Heart right ventricle (tissue), 16 donors: ENCODE measurements at regions of chr18 and their contacts with region 1.

Region 1: DNA sequence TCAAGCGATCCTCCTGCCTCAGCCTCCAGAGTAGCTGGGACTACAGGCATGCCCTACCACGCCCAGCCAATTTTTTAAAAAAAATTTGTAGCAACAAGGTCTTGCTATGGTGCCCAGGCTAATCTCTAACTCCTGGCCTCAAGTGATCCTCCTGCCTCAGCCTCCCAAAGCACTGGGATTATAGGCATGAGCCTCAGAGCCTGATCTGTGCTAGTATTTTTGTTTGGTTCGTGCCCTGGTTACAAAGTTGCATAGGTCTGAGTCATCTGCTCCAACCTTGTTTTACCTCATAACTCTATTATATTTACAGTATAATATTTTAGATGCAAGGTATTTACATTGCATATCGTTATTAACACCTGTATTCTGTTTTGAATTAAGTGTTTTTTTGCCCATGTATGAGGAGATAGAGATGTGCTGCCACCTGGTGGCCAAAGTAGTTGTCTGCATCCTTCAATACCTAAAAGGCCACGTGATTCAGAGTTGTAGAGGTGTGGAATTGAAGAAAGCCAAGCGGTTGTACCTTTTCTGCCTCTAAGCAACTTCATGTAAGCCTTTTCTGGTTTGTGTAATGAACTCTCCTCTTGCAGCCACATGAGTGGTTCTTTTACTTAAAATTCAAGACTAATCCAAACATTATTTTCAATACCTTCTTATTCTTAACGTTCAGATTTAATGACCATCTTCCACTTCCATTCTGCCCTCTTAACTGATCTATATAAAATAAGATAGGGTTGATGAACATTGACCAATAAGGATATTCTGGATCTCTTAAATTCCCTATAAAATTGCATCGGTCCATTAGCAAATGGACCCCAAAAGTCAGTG is 19.9 kb upstream of the CABYR start:
- DNase-seq: peak; percentile 35 to 56
- ATAC-seq: peak; percentile 57 to 86 (median 72)
- H3K4me3 ChIP-seq: no peak overlapping the region
- H3K27ac ChIP-seq: no peak overlapping the region
- H3K4me1 ChIP-seq: peaks cover 0 to 7% (median 0%) of the 10 kb centered on the region in 9 donors
- H3K27me3 ChIP-seq: no peaks in the 10 kb centered on the region
- CTCF ChIP-seq: peak; percentile 81 to 95 (median 93)

Region 2: GRCh38 chr18:23619388-23619881 is 499.5 kb before region 1 on chr18:
- intact Hi-C with region 1: loop called in 5 of 10 experiments (anchors 5 to 10 kb)
- DNase-seq: peak in 1 of 2 donors; percentile 35
- ATAC-seq: peak; percentile 42 to 79 (median 72)
- H3K4me3 ChIP-seq: peak overlapping the region in 9 of 10 donors; percentile 23 to 69 (median 55)
- H3K27ac ChIP-seq: peak overlapping the region in 5 of 10 donors; percentile 20 to 44 (median 36)
- H3K4me1 ChIP-seq: peaks cover 0 to 15% (median 10%) of the 10 kb centered on the region in 9 donors
- H3K27me3 ChIP-seq: peaks cover 0 to 35% (median 0%) of the 10 kb centered on the region in 7 donors
- CTCF ChIP-seq: peak in 1 of 9 donors; percentile 7

Region 3: DNA sequence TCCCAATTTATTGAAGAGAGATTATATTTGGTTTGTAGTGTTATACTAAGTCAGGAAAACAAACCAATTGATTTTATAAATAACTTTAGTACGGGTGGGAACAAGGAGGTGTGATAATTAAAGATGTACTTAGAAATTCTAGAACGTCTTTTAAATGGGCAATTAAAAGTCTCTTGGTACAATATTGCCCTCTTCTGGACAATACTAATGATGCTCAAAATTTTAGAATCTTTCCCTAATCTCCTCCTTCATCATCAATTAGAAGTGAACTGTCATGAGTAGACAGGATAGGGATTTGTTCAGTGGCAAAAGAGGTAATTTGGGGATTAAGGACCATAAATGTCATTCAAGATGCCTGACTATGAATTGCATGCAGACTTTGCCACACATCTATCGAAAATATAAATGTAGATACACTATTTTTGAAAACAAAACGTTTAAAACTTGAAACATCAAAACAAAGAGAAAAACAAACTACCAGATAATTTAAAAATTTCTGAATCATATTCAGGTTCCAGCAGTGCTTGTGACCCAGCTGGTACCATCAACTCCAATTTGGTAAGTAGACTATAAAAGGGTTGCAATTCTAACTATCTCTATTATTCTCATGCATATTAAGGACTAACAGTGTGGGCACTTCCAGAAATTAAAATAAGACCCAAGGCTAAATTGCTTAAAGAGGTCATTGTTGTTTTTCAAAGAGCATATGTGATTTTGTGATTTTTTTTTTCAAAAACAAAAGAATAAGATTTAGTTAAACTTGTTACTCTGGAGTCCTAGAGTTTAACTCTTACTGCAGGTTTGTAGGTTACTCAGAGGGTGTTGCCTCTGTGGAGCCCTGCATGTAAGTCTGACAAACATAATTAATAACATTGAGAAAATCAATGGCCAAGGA is 306.2 kb before region 1 on chr18:
- intact Hi-C with region 1: loop called in 3 of 10 experiments (anchors 5 to 10 kb)
- DNase-seq: no peak
- ATAC-seq: no peak
- H3K4me3 ChIP-seq: no peak overlapping the region
- H3K27ac ChIP-seq: no peak overlapping the region
- H3K4me1 ChIP-seq: peaks cover 0 to 14% (median 0%) of the 10 kb centered on the region in 9 donors
- H3K27me3 ChIP-seq: no peaks in the 10 kb centered on the region
- CTCF ChIP-seq: peak; percentile 28 to 71 (median 62)

Region 4: DNA sequence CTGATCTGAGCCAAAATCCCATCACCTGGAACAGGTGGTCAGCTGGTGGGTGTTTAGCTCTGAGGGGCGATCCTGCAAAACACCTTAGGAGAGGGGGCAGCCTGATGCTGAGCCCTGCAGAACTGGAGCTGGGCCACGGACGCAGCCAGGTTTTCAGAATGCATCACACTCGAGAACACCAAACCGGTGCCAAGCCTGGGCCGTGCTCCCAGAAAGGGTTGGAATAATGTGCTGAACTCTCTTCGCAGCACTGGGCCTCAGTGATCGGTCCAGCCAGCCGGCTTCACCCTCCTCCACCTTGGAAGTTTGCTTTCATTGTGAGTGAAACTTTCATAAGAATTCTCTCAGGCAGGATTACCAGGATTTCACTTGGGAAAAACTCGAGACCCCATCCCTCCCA is 160.9 kb before region 1 on chr18:
- intact Hi-C with region 1: loop called in 8 of 10 experiments (anchors 2 to 10 kb)
- DNase-seq: peak; percentile 74 to 78
- ATAC-seq: peak; percentile 86 to 98 (median 94)
- H3K4me3 ChIP-seq: no peak overlapping the region
- H3K27ac ChIP-seq: peak overlapping the region in 2 of 10 donors; percentile 32 to 36
- H3K4me1 ChIP-seq: peaks cover 0 to 3% (median 0%) of the 10 kb centered on the region in 9 donors
- H3K27me3 ChIP-seq: no peaks in the 10 kb centered on the region
- CTCF ChIP-seq: no peak

Region 5: GRCh38 chr18:24014062-24014985 is 104.6 kb before region 1 on chr18 and contains the start of gene TTC39C:
- intact Hi-C with region 1: loop called in 2 of 10 experiments (anchors 5 to 10 kb)
- DNase-seq: peak; percentile 66 to 69
- ATAC-seq: peak; percentile 72 to 90 (median 84)
- H3K4me3 ChIP-seq: peak within 1 kb of the TSS; percentile 57 to 95 (median 86)
- H3K27ac ChIP-seq: peak within 1 kb of the TSS; percentile 35 to 94 (median 80)
- H3K4me1 ChIP-seq: peaks cover 0 to 81% (median 10%) of the 10 kb centered on the region in 9 donors
- H3K27me3 ChIP-seq: no peaks in the 10 kb centered on the region
- CTCF ChIP-seq: no peak
- total RNA-seq, gene TTC39C: 3.5 to 8.1 (median 5.2) TPM

Region 6: GRCh38 chr18:24075731-24076130 is 43.2 kb before region 1 on chr18:
- intact Hi-C with region 1: loop called in 1 of 10 experiments (anchors 5 kb)
- DNase-seq: no peak
- ATAC-seq: peak in 1 of 8 donors; percentile 23
- H3K4me3 ChIP-seq: no peak overlapping the region
- H3K27ac ChIP-seq: peak overlapping the region; percentile 4 to 83 (median 72)
- H3K4me1 ChIP-seq: peaks cover 0 to 34% (median 15%) of the 10 kb centered on the region in 9 donors
- H3K27me3 ChIP-seq: no peaks in the 10 kb centered on the region
- CTCF ChIP-seq: no peak

Region 7: GRCh38 chr18:24176727-24177416 is 57.9 kb after region 1 on chr18:
- intact Hi-C with region 1: no loop called
- DNase-seq: peak; percentile 29 to 67
- ATAC-seq: peak; percentile 58 to 85 (median 81)
- H3K4me3 ChIP-seq: no peak overlapping the region
- H3K27ac ChIP-seq: no peak overlapping the region
- H3K4me1 ChIP-seq: peaks cover 0 to 14% (median 5%) of the 10 kb centered on the region in 9 donors
- H3K27me3 ChIP-seq: no peaks in the 10 kb centered on the region
- CTCF ChIP-seq: peak; percentile 64 to 86 (median 80)

Region 8: DNA sequence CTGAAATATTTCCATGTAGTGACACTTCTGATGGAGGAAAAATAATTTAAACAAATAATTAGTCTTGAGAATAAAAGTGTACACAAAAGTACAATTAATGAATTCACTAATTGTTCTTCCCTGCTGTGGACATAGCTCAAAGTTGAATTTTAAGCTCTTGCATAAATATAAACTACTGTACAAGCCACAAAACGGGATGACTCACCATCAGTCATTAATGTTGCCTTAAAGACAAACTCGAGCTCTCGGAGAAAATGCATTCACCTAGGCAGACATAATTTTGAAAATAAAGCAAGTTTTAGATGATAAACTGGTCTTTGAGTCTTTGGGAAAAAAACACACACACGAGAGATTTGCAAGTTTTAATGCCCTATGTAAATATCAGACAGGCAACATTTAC is 796.6 kb after region 1 on chr18:
- intact Hi-C with region 1: no loop called
- DNase-seq: no peak
- ATAC-seq: no peak
- H3K4me3 ChIP-seq: no peak overlapping the region
- H3K27ac ChIP-seq: no peak overlapping the region
- H3K4me1 ChIP-seq: peaks cover 0 to 33% (median 15%) of the 10 kb centered on the region in 9 donors
- H3K27me3 ChIP-seq: peaks cover 0 to 5% (median 0%) of the 10 kb centered on the region in 7 donors
- CTCF ChIP-seq: no peak